ENCODE measurements at regions of chr17 and their contacts with region 1.

Region 1: DNA sequence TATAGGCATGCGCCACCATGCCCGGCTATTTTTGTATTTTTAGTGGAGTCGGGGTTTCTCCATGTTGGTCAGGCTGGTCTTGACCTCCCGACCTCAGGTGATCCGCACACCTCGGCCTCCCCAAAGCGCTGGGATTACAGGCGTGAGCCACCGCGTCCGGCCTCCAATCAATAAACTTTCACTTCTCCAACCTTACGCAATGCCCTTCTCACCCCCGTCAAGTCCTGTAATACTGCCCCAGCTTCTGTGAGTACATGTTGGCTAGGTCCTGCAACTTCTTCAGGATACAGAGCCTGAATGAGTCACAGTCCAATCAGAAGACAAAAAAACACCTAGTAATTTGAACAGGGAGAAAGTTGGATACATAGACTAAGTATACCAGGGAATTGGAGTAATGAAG is 47.1 kb upstream of the PHOSPHO1 start:
- DNase-seq: no peak
- H3K4me3 ChIP-seq: no peak overlapping the region
- H3K27ac ChIP-seq: no peak overlapping the region
- H3K4me1 ChIP-seq: peaks cover 0 to 3% (median 2%) of the 10 kb centered on the region in 4 experiments; a peak in 4 of 7 replicates
- H3K27me3 ChIP-seq: no peaks in the 10 kb centered on the region
- CTCF ChIP-seq: no peak
- EP300 ChIP-seq: no peak
- POLR2A ChIP-seq: no peak
- RAD21 ChIP-seq: no peak

Region 2: GRCh38 chr17:49239963-49240362 is 37.7 kb before region 1 on chr17:
- CTCF ChIA-PET with region 1: interaction called, 11 read pairs
- POLR2A ChIA-PET with region 1: no interaction called
- DNase-seq: no peak
- H3K4me3 ChIP-seq: no peak overlapping the region
- H3K27ac ChIP-seq: no peak overlapping the region
- H3K4me1 ChIP-seq: peaks cover 2 to 5% (median 4%) of the 10 kb centered on the region in 4 experiments; a peak in 5 of 7 replicates
- H3K27me3 ChIP-seq: no peaks in the 10 kb centered on the region
- CTCF ChIP-seq: no peak
- EP300 ChIP-seq: no peak
- POLR2A ChIP-seq: no peak
- RAD21 ChIP-seq: no peak

Region 3: GRCh38 chr17:49260011-49260921 is 17.4 kb before region 1 on chr17:
- CTCF ChIA-PET with region 1: interaction called, 11 read pairs
- POLR2A ChIA-PET with region 1: no interaction called
- DNase-seq: peak in 1 of 2 experiments; percentile 70
- H3K4me3 ChIP-seq: peak overlapping the region; percentile 46 to 67 (median 60)
- H3K27ac ChIP-seq: no peak overlapping the region
- H3K4me1 ChIP-seq: peaks cover 0 to 3% (median 1%) of the 10 kb centered on the region in 4 experiments; a peak in 1 of 7 replicates
- H3K27me3 ChIP-seq: peaks cover 2 to 16% (median 13%) of the 10 kb centered on the region in 4 experiments; a peak in 6 of 7 replicates
- CTCF ChIP-seq: no peak
- EP300 ChIP-seq: no peak
- POLR2A ChIP-seq: no peak
- RAD21 ChIP-seq: no peak

Region 4: GRCh38 chr17:49343273-49343672 is 65.6 kb after region 1 on chr17:
- CTCF ChIA-PET with region 1: no interaction called
- POLR2A ChIA-PET with region 1: no interaction called
- DNase-seq: no peak
- H3K4me3 ChIP-seq: no peak overlapping the region
- H3K27ac ChIP-seq: no peak overlapping the region
- H3K4me1 ChIP-seq: no peaks in the 10 kb centered on the region
- H3K27me3 ChIP-seq: no peaks in the 10 kb centered on the region
- CTCF ChIP-seq: no peak
- EP300 ChIP-seq: no peak
- POLR2A ChIP-seq: no peak
- RAD21 ChIP-seq: no peak